GM12878 (cell line): ENCODE measurements at regions of chr21 and their contacts with region 1.

Region 1: DNA sequence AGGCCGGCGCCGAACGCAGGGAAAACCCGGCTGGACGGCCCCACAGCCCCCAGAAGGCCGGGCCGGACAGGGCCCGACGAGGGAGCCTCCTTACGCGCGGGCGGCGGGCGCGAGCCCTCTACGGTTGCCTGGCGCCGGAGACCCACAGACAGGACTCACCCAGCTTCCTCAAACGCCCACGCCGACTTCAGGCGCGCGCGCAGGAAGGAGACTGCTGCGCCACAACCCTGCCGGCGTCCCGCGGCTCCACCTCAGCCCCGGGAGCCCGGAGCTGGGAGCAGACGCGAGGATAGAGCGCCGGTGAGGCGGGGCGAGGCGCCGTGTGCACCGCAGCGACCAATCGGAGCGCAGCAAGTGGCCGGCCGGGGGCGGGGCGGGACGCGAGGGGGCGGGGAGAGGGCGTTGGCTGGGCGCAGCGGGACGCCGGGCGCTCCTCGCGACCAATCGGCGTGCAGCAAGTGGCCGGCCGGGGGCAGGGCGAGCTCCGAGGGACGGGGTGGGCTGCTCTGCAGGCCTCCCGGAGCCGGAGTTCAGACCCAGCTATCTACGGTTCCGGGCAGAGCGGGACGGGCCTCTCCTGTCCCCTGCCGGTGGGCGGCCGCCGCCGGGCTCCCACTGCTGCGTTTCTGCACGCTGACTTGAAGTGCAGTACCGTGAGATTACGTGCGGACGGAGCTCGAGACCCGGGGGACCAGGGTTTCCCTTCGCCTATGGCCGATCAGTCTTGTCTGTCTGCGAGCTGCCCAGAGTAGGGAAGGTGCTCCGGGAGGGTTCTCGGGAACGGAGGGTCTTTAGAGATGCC is at the start of gene TMEM50B:
- DNase-seq: peak; percentile 79
- ATAC-seq: peak; percentile 95
- H3K4me3 ChIP-seq: peak within 1 kb of the TSS; percentile 93
- H3K27ac ChIP-seq: peak within 1 kb of the TSS; percentile 82
- H3K4me1 ChIP-seq: peaks cover 3% of the 10 kb centered on the region; the same call in 1 of the 2 replicates
- H3K27me3 ChIP-seq: no peaks in the 10 kb centered on the region
- CTCF ChIP-seq: peak; percentile 25 to 52 (median 33); a peak in 4 of 6 replicates
- EP300 ChIP-seq: peak in 1 of 2 experiments; percentile 20; a peak in 1 of 4 replicates
- POLR2A ChIP-seq: peak; percentile 94
- RAD21 ChIP-seq: peak; percentile 12; the same call in 1 of the 2 replicates
- polyA plus RNA-seq, gene TMEM50B: 15.9 to 23.8 TPM

Region 2: DNA sequence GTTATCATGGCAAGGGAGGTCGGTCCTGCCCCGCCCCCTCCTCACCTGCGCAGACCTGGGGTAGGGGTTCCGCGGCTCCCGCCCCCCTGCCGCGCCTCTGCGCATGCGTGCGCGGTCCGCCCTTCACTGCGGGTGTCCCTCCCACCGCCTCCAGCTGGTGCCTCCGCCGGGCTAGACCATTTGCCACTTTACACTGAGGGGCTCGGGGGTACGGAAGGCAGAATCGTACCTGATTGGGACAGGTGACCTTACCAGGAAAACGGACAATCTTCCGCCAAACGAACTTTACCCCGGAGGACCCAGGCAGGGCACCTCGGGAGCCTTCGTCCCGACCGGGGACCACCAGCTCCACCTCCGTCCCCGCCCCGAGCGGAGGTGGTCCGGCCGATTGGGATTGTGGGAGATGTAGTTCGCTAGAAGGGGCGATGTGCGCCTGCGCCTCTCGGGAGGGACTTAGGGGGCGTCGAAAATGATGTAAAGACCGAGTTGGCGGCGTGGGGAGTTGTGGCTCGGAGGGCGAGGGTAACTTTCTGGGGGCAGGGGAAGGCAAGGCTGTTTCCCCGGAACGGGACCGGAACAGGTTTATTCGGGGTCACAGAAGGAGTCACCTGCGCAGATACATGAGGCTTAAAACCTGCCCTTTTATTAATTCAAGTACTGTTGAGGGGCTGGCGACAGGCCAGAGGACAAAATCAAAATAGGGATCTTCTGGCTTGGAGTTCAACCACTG is 11.7 kb after region 1 on chr21 and contains the start of gene DNAJC28:
- CTCF ChIA-PET with region 1: interaction called, 21 read pairs
- POLR2A ChIA-PET with region 1: interaction called, 26 read pairs
- RAD21 ChIA-PET with region 1: interaction called, 23 read pairs
- SMC1A ChIA-PET with region 1: interaction called, 17 read pairs
- in situ Hi-C with region 1: no loop called
- intact Hi-C with region 1: no loop called
- DNase-seq: peak; percentile 80
- ATAC-seq: peak; percentile 99
- H3K4me3 ChIP-seq: peak within 1 kb of the TSS; percentile 68
- H3K27ac ChIP-seq: peak within 1 kb of the TSS; percentile 48; the same call in 1 of the 2 replicates
- H3K4me1 ChIP-seq: no peaks in the 10 kb centered on the region
- H3K27me3 ChIP-seq: no peaks in the 10 kb centered on the region
- CTCF ChIP-seq: no peak
- EP300 ChIP-seq: no peak
- POLR2A ChIP-seq: peak; percentile 65
- RAD21 ChIP-seq: no peak
- polyA plus RNA-seq, gene DNAJC28: 0.53 to 0.77 TPM